Gastrocnemius medialis (tissue), 4 donors: ENCODE measurements at regions of chr22 and their contacts with region 1.

Region 1: DNA sequence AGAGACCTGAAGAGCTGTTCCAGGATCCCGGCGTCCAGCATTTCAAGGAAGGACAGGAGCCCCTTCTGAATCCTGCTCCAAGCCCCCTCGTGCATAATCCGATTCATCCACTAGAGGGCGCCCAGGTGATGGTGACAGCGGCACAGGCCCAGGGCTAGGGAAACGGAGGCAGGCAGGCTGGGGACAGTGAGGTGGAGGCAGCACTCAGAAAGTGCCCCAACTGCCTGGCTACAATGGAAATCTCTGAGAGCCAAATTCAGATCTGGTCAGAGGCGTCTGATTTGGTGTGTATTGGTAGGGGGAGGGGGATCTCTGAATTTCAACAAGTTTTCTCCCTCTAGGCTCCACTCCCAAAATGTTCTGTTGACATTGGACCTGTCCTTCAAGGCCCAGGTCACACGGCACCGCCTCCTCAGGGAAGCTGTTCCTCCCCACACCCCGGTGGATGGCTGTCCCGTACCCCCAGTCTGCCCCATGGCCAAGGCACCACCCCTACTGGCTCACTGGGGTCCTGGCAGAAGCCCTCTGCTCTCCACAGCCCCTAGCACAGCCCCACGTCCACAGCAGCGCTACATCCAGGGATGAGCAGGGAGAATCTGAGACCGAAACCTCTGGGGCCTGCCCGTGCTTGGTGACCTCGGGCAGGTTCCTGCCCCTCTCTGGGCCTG is 142.9 kb downstream of the CRYBB2 start:
- DNase-seq: peak in 1 of 2 donors; percentile 40
- ATAC-seq: peak; percentile 36 to 71
- H3K4me3 ChIP-seq: no peak overlapping the region
- H3K27ac ChIP-seq: no peak overlapping the region
- H3K4me1 ChIP-seq: peaks cover 0 to 4% of the 10 kb centered on the region in 2 donors
- H3K27me3 ChIP-seq: no peaks in the 10 kb centered on the region
- CTCF ChIP-seq: peak; percentile 58 to 86 (median 78)
- POLR2A ChIP-seq: no peak

Region 2: DNA sequence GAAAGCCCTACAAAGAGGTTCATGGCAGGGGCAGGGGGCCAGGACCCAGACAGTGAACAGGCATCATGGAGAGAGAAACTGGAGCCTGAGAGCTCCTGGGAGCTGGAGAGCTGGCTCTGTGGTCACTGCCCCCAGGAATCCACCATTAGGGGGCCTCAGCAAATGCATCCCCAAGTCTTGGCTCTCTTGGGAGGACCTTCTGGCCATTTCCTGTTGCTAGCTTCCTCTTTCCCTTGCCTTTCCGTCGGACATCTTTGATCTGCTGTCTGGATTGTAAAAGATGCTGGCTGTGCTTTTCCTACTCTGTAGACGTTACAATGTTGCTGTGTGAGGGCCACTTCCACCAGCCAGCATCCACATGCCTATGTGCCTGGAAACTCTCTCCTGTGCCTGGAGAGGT is 150.0 kb before region 1 on chr22:
- in situ Hi-C with region 1: no loop called
- intact Hi-C with region 1: no loop called
- DNase-seq: no peak
- ATAC-seq: no peak
- H3K4me3 ChIP-seq: no peak overlapping the region
- H3K27ac ChIP-seq: no peak overlapping the region
- H3K4me1 ChIP-seq: no peaks in the 10 kb centered on the region
- H3K27me3 ChIP-seq: no peaks in the 10 kb centered on the region
- CTCF ChIP-seq: no peak
- POLR2A ChIP-seq: no peak

Region 3: DNA sequence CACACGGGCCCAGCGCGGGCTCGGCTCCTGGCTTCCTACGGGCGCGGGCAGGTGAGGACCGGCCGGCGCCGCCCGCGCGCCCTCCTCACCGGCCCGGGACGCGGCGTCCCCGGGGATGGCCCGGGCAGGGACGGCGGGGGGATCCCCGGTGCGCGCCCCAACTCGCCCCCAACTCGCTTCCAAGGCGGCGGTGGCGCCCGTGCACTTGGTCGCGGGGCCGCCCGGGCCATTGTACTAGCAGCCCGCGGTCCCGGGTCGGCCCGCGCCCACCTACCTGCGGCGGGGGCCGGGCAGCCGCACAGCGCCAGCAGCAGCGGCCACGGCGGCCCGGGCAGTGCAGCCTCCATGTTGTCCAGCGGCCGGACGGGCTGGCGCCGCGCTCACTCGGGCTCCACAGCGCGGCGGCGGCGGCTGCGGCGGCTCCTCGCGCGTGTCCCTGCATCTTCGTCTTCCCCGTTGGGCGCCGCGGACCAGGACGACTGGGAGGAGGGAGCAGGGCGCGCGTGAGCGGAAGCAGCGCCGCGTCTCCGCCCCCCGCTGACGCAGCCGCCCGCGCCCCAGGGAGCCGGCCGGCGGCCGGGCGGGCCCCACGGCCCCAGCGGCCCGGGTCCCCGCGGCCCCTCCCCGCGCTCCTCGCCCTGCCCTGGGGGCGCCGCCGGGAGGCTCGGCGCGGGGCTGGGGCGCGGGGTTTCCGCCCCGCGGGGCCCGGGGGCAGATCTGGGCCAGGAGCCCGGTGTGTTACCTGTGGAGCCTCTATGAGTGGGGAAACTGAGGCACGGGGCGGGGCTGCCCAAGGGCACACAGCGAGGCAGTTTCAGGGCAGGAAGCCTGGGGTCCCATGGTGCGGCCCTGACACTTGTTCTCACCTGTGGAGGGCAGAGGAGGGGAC is 42.8 kb after region 1 on chr22:
- in situ Hi-C with region 1: no loop called
- intact Hi-C with region 1: loop called (anchors 1 kb)
- DNase-seq: peak; percentile 44 to 49
- ATAC-seq: peak; percentile 71 to 72
- H3K4me3 ChIP-seq: peak overlapping the region; percentile 60 to 69 (median 63)
- H3K27ac ChIP-seq: peak overlapping the region; percentile 68 to 83 (median 80)
- H3K4me1 ChIP-seq: peaks cover 32 to 33% of the 10 kb centered on the region in 2 donors
- H3K27me3 ChIP-seq: no peaks in the 10 kb centered on the region
- CTCF ChIP-seq: peak in 1 of 5 experiments; percentile 8
- POLR2A ChIP-seq: peak; percentile 78 to 82

Region 4: DNA sequence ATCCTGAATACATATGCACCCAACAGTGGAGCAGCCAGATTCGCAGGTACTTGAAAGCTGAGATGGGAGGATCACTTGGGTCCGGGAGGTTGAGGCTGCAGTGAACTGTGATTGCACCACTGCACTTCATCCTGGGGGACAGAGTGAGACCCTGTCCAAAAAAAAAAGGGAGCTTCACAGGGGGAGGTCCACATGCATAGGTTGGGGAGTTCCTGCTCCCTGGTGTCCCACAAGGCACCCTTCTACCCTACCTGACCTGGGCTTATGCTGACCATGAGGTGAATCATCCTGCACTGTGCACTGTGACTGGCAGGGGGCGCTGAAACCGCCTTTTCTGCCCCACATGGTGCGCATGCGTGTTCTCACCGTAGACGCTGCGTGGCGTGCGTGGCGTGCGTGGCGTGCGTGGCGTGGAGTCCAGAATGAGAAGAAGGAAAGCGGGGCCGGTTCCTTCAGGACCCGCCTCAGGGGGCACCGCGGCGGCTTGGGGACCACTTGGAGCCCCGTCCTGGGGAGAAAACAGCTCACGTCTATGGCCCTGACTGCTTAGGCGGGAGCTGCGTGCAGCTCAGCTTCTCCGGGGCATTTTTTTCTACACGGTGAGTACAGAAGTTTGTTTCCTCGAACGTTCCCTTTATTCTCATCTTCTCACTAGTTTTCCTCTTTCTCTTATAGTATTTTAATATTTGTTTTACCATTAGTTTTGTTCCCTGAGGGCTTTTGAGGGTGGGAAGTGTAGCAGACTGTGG is 85.5 kb after region 1 on chr22:
- in situ Hi-C with region 1: no loop called
- intact Hi-C with region 1: loop called (anchors 5 kb)
- DNase-seq: peak; percentile 67 to 88
- ATAC-seq: peak; percentile 96 to 99
- H3K4me3 ChIP-seq: peak overlapping the region; percentile 68 to 90 (median 73)
- H3K27ac ChIP-seq: peak overlapping the region; percentile 79 to 88 (median 82)
- H3K4me1 ChIP-seq: peaks cover 20 to 33% of the 10 kb centered on the region in 2 donors
- H3K27me3 ChIP-seq: no peaks in the 10 kb centered on the region
- CTCF ChIP-seq: peak; percentile 80 to 92 (median 90)
- POLR2A ChIP-seq: peak; percentile 28 to 30